ENCODE measurements at regions of chr14 and their contacts with region 1.

Region 1: GRCh38 chr14:105203057-105203531 is 22.0 kb upstream of the NUDT14 start:
- DNase-seq: peak; percentile 70
- H3K4me3 Mint-ChIP-seq: no peak overlapping the region
- H3K27ac Mint-ChIP-seq: no peak overlapping the region
- H3K4me1 Mint-ChIP-seq: peaks cover 6% of the 10 kb centered on the region
- H3K27me3 Mint-ChIP-seq: peaks cover 17% of the 10 kb centered on the region

Region 2: DNA sequence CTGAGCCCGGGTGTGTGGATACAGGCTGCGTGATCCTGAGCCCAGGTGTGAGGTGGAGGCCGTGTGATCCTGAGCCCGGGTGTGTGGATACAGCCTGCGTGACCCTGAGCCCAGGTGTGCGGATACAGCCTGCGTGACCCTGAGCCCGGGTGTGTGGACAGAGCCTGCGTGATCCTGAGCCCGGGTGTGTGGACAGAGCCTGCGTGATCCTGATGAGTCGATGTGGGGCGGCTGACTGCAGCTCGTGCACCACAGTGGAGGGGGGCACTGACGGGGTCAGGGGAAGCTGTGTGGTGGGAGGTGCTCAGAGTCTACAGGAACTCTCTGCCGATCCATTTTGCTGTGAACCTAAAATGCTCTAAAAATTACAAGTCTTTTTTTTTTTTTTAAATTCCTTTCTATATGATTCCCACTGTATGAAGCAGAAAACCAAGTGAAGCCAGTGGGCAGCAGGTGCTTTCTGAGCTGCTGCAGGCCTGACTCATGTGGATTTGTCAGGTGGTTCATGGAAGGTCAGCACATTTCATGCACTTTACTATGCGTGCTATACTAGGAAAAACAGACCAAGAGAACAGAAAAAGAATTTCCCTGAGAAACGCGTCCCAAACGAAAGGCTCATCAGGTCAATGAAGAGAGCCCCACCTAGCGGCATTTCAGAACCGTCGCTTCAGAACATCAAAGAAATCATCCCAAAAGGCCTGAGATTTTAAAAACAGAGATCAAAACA is 78.4 kb after region 1 on chr14:
- CTCF ChIA-PET with region 1: no interaction called
- intact Hi-C with region 1: loop called (anchors 2 kb)
- DNase-seq: peak; percentile 40
- H3K4me3 Mint-ChIP-seq: no peak overlapping the region
- H3K27ac Mint-ChIP-seq: no peak overlapping the region
- H3K4me1 Mint-ChIP-seq: peaks cover 20% of the 10 kb centered on the region
- H3K27me3 Mint-ChIP-seq: no peaks in the 10 kb centered on the region

Region 3: DNA sequence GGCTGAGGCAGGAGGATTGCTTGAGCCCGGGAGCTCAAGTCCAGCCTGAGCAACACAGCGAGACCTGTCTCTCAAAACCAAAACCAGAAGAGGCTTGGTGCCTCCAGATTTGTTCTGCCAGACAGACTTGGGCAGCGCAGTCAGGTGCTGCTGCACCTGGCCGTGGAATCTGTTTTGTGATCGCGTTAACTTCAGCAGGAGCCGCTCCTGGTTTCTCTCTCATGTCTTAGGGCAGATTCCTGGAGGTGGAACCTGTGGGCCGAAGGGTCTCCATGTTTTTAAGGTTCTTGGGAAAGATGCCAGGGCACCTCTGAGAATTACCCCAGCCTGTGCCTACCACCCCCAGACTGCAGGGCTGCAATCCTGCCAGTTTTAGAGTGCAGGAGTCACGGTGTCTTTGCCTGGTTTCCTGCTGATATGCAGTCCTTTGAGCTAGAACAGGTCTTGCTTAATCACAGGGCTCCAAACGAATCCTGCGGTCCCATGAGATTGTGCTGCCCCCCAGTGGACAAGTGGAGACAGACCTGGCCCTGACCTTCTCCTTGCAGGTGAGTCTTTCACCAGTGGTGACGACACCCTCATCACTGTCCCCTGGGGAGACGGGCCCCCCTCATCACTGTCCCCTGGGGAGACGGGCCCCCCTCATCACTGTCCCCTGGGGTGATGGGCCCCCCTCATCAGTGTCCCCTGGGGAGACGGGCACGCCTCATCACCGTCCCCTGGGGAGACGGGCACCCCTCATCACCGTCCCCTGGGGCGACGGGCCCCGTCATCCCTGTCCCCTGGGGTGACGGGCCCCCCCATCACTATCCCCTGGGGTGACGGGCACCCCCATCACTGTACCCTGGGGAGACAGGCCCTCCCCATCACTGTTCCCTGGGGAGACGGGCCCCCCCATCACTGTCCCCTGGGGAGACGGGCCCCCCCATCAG is 149.1 kb after region 1 on chr14:
- CTCF ChIA-PET with region 1: interaction called, 6 read pairs
- intact Hi-C with region 1: loop called (anchors 1 kb)
- DNase-seq: peak; percentile 96
- H3K4me3 Mint-ChIP-seq: no peak overlapping the region
- H3K27ac Mint-ChIP-seq: no peak overlapping the region
- H3K4me1 Mint-ChIP-seq: peaks cover 3% of the 10 kb centered on the region
- H3K27me3 Mint-ChIP-seq: no peaks in the 10 kb centered on the region